Endothelial cell of umbilical vein (primary cell): ENCODE measurements at regions of chr1 and their contacts with region 1.

Region 1: DNA sequence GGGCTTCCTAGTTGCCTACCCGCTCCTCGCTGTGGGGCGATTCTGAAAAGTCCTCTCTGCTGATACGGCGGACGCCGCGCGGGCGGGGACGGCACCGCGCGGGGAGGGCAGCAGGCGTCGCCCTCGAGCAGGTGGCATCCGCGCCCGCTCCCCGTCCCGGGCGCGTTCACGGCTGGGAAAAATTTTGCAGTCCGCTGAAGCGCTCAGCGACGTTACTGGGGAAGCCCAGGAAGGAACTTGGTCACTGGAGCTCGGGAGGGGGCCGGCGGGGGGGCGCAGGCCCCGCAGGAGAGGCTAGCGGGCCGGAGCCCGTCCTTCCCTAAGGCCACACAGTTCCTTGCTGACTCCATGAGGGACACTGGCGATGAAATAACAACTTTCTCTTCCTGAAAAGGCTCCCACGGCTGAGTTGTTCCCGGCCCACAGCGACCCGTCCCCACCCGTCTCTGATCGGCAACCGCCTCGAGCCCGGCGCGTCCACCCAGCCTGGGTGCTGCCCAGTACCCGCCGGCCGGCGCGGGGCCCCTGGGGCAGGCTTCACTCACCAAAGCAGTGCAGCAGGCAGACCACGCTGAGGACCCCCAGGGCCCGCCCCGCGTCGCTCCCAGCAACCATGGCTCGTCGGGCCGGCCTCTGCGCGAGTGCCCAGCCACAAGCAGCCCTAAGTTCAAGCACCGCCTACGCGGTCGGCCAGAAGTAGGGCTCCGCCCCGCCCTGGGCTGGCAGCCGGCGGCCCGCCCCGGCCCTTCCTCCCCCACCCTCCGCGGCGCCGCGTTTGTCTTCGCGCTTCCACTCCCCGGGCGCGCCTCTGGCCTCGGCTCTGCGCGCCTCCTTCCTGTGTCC is at the start of gene CD58:
- DNase-seq: peak; percentile 83
- H3K4me3 ChIP-seq: peak within 1 kb of the TSS; percentile 64 to 93 (median 69)
- H3K27ac ChIP-seq: peak within 1 kb of the TSS; percentile 70
- H3K4me1 ChIP-seq: peaks cover 9% of the 10 kb centered on the region
- H3K27me3 ChIP-seq: peaks cover 6% of the 10 kb centered on the region in 2 experiments
- CTCF ChIP-seq: peak; percentile 75
- POLR2A ChIP-seq: peak; percentile 81
- total RNA-seq, gene CD58: 9.8 and 12.3 TPM in 2 replicates

Region 2: GRCh38 chr1:115949156-115949555 is 621.4 kb before region 1 on chr1:
- CTCF ChIA-PET with region 1: no interaction called
- POLR2A ChIA-PET with region 1: no interaction called
- dilution Hi-C with region 1: no loop called
- intact Hi-C with region 1: no loop called
- DNase-seq: no peak
- H3K4me3 ChIP-seq: no peak overlapping the region
- H3K27ac ChIP-seq: no peak overlapping the region
- H3K4me1 ChIP-seq: no peaks in the 10 kb centered on the region
- H3K27me3 ChIP-seq: peaks cover 0 to 2% of the 10 kb centered on the region in 2 experiments
- CTCF ChIP-seq: no peak
- POLR2A ChIP-seq: no peak

Region 3: GRCh38 chr1:116139592-116140134 is 430.9 kb before region 1 on chr1:
- CTCF ChIA-PET with region 1: interaction called, 15 read pairs
- POLR2A ChIA-PET with region 1: no interaction called
- dilution Hi-C with region 1: no loop called
- intact Hi-C with region 1: loop called (anchors 2 kb)
- DNase-seq: no peak
- H3K4me3 ChIP-seq: no peak overlapping the region
- H3K27ac ChIP-seq: no peak overlapping the region
- H3K4me1 ChIP-seq: peaks cover 2% of the 10 kb centered on the region
- H3K27me3 ChIP-seq: peaks cover 0 to 10% of the 10 kb centered on the region in 2 experiments
- CTCF ChIP-seq: no peak
- POLR2A ChIP-seq: no peak

Region 4: GRCh38 chr1:116435806-116436610 is 134.6 kb before region 1 on chr1:
- CTCF ChIA-PET with region 1: no interaction called
- POLR2A ChIA-PET with region 1: no interaction called
- dilution Hi-C with region 1: no loop called
- intact Hi-C with region 1: loop called (anchors 5 kb)
- DNase-seq: no peak
- H3K4me3 ChIP-seq: no peak overlapping the region
- H3K27ac ChIP-seq: no peak overlapping the region
- H3K4me1 ChIP-seq: peaks cover 24% of the 10 kb centered on the region
- H3K27me3 ChIP-seq: no peaks in the 10 kb centered on the region
- CTCF ChIP-seq: no peak
- POLR2A ChIP-seq: no peak

Region 5: GRCh38 chr1:116586741-116587143 is 16.2 kb after region 1 on chr1:
- CTCF ChIA-PET with region 1: interaction called, 21 read pairs
- POLR2A ChIA-PET with region 1: no interaction called
- dilution Hi-C with region 1: no loop called
- intact Hi-C with region 1: no loop called
- DNase-seq: no peak
- H3K4me3 ChIP-seq: no peak overlapping the region
- H3K27ac ChIP-seq: no peak overlapping the region
- H3K4me1 ChIP-seq: peaks cover 6% of the 10 kb centered on the region
- H3K27me3 ChIP-seq: no peaks in the 10 kb centered on the region
- CTCF ChIP-seq: no peak
- POLR2A ChIP-seq: no peak

Region 6: DNA sequence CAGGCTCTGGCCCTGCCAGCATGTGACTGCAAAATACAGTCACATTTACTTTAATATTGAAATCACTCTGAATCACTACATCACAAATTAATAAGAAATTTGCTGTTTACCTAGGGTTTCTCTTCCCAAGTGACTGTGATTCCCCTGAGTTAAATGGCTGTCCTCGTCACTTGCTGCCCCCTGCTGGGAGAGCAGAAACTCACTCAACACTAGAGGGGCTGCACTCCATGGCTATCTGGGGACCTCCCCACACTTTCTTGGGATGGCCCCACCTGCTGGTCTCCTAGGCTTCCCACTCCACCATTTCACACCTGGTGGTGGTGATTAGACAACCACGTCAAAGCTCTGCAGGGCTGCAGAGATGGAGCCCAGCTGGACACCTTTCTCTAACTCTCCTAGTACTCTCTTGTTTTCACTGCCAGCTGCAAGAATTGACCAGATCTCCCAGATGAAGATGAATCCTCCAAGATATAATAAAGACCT is 247.0 kb after region 1 on chr1:
- CTCF ChIA-PET with region 1: no interaction called
- POLR2A ChIA-PET with region 1: no interaction called
- dilution Hi-C with region 1: no loop called
- intact Hi-C with region 1: loop called (anchors 1 kb)
- DNase-seq: peak; percentile 54
- H3K4me3 ChIP-seq: no peak overlapping the region
- H3K27ac ChIP-seq: no peak overlapping the region
- H3K4me1 ChIP-seq: no peaks in the 10 kb centered on the region
- H3K27me3 ChIP-seq: peaks cover 0 to 7% of the 10 kb centered on the region in 2 experiments
- CTCF ChIP-seq: peak; percentile 66 to 73
- POLR2A ChIP-seq: no peak

Region 7: DNA sequence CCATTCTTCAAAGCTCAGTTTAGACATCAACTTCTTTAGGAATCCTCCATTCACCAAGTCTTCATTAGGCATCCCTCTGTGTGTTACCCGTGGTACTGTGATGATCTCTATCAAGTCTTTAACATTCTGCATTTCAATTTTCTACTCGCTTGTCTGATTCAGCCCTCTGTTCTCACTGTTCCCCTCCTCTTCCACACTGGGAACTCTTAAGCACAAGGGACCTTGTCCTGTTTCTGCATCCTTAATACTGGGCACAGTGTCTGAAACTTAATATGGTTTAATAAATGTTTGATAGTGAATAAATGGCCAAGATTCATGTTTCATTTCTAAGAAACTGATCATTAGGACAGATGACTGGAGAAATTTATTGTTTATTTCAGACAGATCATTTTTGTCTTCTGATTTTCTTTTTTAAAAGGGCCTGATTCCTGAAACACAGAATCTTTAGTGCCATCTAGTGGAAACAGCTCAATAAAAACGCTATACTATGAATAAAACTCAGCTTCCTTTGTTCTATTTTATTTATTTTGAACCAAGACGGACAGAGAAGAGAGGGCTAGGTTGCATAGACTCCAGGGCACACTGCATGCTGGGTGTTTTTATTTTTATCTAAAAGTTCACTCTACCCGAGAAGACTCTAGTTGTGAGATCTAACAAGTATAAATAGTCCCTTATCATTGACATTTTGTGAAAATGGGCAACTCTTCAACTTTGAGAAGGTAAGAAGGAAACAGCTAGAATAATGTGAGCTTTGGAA is 557.9 kb after region 1 on chr1:
- CTCF ChIA-PET with region 1: interaction called, 10 read pairs
- POLR2A ChIA-PET with region 1: no interaction called
- dilution Hi-C with region 1: no loop called
- intact Hi-C with region 1: loop called (anchors 5 kb)
- DNase-seq: peak; percentile 68
- H3K4me3 ChIP-seq: no peak overlapping the region
- H3K27ac ChIP-seq: no peak overlapping the region
- H3K4me1 ChIP-seq: no peaks in the 10 kb centered on the region
- H3K27me3 ChIP-seq: peaks cover 11 to 25% of the 10 kb centered on the region in 2 experiments
- CTCF ChIP-seq: peak; percentile 36 to 37
- POLR2A ChIP-seq: no peak